ENCODE measurements at regions of chr3 and their contacts with region 1.

Region 1: GRCh38 chr3:177810162-177810623 is 612.9 kb upstream of the TBL1XR1 start:
- DNase-seq: peak; percentile 91
- H3K4me3 Mint-ChIP-seq: peak overlapping the region; percentile 28
- H3K27ac Mint-ChIP-seq: peak overlapping the region; percentile 88
- H3K4me1 Mint-ChIP-seq: peaks cover 43% of the 10 kb centered on the region
- H3K27me3 Mint-ChIP-seq: no peaks in the 10 kb centered on the region
- CTCF ChIP-seq: no peak

Region 2: DNA sequence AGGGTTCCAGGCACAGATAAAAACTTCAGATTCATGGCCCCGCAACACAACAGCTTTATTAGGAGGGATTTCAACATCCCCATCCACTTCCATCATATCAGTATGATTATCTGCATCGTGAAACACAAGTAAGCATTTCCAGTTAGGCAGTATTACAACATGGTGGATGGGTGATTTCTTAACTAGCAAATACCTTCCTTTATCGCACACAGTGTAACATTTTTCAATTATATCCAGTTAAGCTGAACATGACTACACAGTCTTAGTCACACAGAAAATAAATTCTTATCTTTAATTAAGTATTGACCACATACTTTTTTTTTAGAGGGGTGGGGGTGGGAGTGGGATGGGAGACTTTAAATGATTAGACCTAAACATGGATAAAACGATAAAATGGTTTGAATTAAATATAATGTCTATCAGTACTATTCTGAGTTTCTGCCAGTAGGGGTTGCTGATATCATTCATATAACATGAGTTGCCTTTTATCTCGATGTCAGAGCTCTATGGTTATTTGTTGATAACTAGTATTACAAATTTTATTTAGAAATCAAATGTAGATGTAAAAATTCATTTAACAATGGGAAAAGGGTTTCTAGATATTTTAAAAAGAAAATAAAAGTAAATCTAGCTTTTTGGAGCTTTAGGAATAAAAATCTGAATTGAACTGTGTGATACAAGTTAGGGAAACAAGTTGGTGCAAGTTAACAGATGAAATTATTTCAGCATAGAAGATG is 759.5 kb before region 1 on chr3:
- CTCF ChIA-PET with region 1: interaction called, 3 read pairs
- POLR2A ChIA-PET with region 1: interaction called, 4 read pairs
- intact Hi-C with region 1: loop called (anchors 5 kb)
- DNase-seq: peak; percentile 53
- H3K4me3 Mint-ChIP-seq: no peak overlapping the region
- H3K27ac Mint-ChIP-seq: no peak overlapping the region
- H3K4me1 Mint-ChIP-seq: peaks cover 5% of the 10 kb centered on the region
- H3K27me3 Mint-ChIP-seq: no peaks in the 10 kb centered on the region
- CTCF ChIP-seq: peak; percentile 52

Region 3: DNA sequence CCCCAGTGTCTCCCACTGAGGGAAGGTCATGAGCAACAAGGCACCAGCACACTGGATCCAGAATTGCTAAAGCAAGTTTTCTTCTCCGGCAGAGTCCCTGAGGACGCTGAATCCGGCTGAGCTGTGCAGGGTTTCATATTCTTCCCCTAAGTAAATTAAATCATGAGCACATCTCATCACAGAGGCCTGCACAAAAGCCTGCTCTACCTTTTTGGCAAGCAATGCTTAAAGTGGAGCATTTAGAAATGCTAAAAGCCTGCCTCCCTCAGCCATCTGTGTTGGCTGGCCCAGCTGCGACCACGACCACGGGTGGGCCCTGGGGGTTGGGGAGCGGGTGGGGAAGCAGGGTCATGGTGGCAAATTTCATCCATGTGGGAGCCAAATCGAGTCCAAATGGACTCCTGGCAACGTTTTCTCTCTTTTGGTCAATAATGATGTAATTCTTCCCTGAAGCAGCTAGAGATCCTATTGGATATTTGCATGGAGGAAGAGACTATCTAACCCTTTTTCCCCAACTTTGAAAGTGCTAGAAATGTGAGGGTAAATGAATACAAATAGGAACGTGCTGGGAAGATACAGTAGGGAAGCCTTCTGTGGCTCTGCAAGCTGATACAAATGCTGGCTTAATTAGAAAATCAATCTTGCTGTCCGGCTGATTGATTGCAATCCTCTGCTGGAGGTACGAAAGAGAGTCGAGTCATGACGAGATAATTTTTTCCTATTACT is 80.1 kb before region 1 on chr3:
- CTCF ChIA-PET with region 1: no interaction called
- POLR2A ChIA-PET with region 1: no interaction called
- intact Hi-C with region 1: no loop called
- DNase-seq: no peak
- H3K4me3 Mint-ChIP-seq: no peak overlapping the region
- H3K27ac Mint-ChIP-seq: no peak overlapping the region
- H3K4me1 Mint-ChIP-seq: peaks cover 17% of the 10 kb centered on the region
- H3K27me3 Mint-ChIP-seq: no peaks in the 10 kb centered on the region
- CTCF ChIP-seq: no peak

Region 4: GRCh38 chr3:177777699-177778098 is 32.5 kb before region 1 on chr3:
- CTCF ChIA-PET with region 1: interaction called, 6 read pairs
- POLR2A ChIA-PET with region 1: interaction called, 14 read pairs
- intact Hi-C with region 1: no loop called
- DNase-seq: peak; percentile 74
- H3K4me3 Mint-ChIP-seq: no peak overlapping the region
- H3K27ac Mint-ChIP-seq: no peak overlapping the region
- H3K4me1 Mint-ChIP-seq: peaks cover 15% of the 10 kb centered on the region
- H3K27me3 Mint-ChIP-seq: no peaks in the 10 kb centered on the region
- CTCF ChIP-seq: peak; percentile 49

Region 5: DNA sequence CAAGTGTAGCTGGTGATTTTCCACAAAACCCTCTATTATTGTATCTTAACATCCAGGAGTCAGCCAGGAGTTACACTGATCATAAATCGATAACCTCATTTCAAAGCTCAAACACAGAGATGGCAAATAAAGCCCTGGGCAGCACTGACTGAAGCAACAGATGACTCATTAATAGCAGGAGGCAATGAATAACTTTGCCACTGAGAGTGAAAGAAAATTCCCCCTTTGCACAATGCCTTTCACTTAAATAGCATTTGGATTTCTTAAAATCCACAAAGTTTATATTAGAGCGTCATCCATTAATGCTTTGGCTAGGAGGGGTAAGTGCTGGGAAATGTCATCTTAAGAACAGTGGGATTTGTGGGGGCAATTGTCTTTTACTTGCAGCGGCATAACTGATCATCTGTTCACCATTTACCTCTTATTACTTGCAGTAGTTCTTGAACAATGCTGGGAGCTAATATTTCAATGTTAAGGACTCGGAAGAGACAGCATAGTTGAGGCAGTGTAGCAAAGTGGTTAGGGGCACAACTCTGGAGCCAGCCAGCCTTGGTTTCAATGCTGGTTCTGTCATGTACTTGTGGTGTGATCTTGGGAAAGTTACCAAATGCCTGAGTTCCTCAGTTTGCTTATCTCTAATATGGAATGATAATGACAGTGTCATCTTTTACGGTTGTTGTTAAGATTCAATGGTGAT is 17.5 kb after region 1 on chr3:
- CTCF ChIA-PET with region 1: interaction called, 4 read pairs
- POLR2A ChIA-PET with region 1: interaction called, 34 read pairs
- intact Hi-C with region 1: no loop called
- DNase-seq: peak; percentile 88
- H3K4me3 Mint-ChIP-seq: peak overlapping the region; percentile 75
- H3K27ac Mint-ChIP-seq: peak overlapping the region; percentile 89
- H3K4me1 Mint-ChIP-seq: peaks cover 51% of the 10 kb centered on the region
- H3K27me3 Mint-ChIP-seq: no peaks in the 10 kb centered on the region
- CTCF ChIP-seq: no peak

Region 6: GRCh38 chr3:177835008-177835407 is 24.8 kb after region 1 on chr3:
- CTCF ChIA-PET with region 1: interaction called, 3 read pairs
- POLR2A ChIA-PET with region 1: interaction called, 11 read pairs
- intact Hi-C with region 1: no loop called
- DNase-seq: peak; percentile 86
- H3K4me3 Mint-ChIP-seq: no peak overlapping the region
- H3K27ac Mint-ChIP-seq: peak overlapping the region; percentile 90
- H3K4me1 Mint-ChIP-seq: peaks cover 83% of the 10 kb centered on the region
- H3K27me3 Mint-ChIP-seq: no peaks in the 10 kb centered on the region
- CTCF ChIP-seq: no peak

Measured in MCF 10A (cell line).